Activated T-helper 2 cell treated with anti-CD3 and anti-CD28 coated beads, Interferon-gamma antibody, Interleukin-2, Interleukin-4, amounts not matched to agents 10 μg/mL and 5 μg/mL and 100 μg/mL, durations not matched to agents 14 hours and 24 hours and 36 hours (primary cell): ENCODE measurements at regions of chr5 and their contacts with region 1.

Region 1: GRCh38 chr5:10635257-10635866 is 71.5 kb downstream of the ANKRD33B start:
- DNase-seq: peak; percentile 69
- H3K4me3 Mint-ChIP-seq: peak overlapping the region; percentile 73
- H3K27ac Mint-ChIP-seq: peak overlapping the region; percentile 97
- H3K4me1 Mint-ChIP-seq: peaks cover 57% of the 10 kb centered on the region
- H3K27me3 Mint-ChIP-seq: no peaks in the 10 kb centered on the region

Region 2: GRCh38 chr5:10249948-10250803 is 385.2 kb before region 1 on chr5 and contains the start of gene CCT5:
- intact Hi-C with region 1: loop called (anchors 10 kb)
- DNase-seq: peak; percentile 90
- H3K4me3 Mint-ChIP-seq: peak within 1 kb of the TSS; percentile 96
- H3K27ac Mint-ChIP-seq: peak within 1 kb of the TSS; percentile 98
- H3K4me1 Mint-ChIP-seq: peaks cover 41% of the 10 kb centered on the region
- H3K27me3 Mint-ChIP-seq: no peaks in the 10 kb centered on the region
- total RNA-seq, gene CCT5: 494 and 522 TPM in 2 replicates

Region 3: DNA sequence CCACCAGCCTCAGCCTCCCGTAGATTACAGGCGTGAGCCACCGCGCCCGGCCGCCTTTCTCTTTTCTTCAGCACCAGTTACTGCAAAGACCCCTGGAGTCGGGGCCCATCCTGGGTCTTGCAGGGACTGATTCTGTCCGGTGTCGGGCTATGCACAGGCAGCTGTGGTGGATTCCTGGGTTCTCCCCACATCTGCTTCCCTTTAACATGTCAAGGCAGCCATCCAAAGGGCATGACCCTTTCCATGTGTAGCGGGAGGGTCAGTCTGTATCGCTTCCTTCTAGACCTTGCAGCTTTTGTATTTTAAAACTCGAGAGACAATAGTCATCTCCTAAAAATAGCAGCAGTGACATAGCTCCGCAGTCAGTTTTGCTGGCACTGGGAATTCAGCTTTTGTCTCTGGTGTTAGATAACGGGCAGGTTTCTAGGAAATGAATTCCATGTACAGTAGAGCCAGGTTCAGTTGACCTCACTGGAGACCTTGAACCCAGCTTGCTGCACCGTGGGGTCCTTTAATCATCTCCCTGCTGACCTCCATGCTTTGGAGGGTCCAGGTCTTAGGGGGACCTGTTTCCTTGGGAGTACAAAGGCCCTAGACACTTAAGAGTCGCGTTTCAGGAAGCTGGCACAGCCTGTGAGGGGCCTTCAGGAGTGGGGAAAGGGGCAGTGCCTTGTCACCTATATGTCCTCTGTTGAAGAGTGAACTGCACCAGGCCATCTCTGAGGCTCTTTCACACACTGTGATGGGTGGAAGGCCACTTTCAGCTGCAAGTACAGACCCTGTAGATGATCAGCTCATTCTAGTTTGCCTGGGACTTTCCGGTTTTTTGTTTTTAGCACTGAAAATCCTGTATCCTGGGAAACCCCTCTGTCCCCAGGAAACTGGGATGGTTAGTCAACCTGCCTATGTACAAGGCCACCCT is 57.7 kb before region 1 on chr5:
- intact Hi-C with region 1: loop called (anchors 2 kb)
- DNase-seq: no peak
- H3K4me3 Mint-ChIP-seq: no peak overlapping the region
- H3K27ac Mint-ChIP-seq: peak overlapping the region; percentile 30
- H3K4me1 Mint-ChIP-seq: peaks cover 66% of the 10 kb centered on the region
- H3K27me3 Mint-ChIP-seq: no peaks in the 10 kb centered on the region

Region 4: DNA sequence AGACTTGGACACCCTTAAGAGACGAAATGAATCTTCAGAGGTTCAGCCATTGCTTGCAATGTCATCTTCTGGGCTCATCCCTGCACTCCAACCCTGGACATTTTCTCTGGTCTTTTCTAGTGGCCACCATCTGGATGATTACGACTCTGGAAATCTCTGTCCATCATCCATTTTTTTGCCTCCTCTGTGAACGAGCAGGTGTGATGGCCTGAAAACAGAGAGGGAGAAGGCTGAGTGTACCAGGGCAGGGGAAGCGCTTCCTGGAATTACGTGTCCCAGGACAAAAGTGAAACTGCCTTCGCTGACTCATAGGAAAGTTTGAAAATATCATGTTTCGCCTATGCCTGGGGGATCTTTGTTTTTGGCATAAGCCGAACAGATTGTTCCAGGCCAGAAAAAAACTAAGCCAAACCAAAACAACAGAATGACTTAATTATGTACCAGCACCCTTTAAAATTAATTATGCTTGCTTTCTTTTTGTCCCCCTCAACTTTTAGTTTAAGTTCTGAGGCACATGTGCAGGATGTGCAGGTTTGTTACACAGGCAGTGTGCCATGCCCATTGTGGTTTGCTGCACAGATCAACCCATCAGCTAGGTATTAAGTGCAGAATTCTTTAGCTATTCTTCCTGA is 39.6 kb before region 1 on chr5:
- intact Hi-C with region 1: loop called (anchors 1 kb)
- DNase-seq: peak; percentile 28
- H3K4me3 Mint-ChIP-seq: peak overlapping the region; percentile 7
- H3K27ac Mint-ChIP-seq: peak overlapping the region; percentile 79
- H3K4me1 Mint-ChIP-seq: peaks cover 69% of the 10 kb centered on the region
- H3K27me3 Mint-ChIP-seq: no peaks in the 10 kb centered on the region

Region 5: DNA sequence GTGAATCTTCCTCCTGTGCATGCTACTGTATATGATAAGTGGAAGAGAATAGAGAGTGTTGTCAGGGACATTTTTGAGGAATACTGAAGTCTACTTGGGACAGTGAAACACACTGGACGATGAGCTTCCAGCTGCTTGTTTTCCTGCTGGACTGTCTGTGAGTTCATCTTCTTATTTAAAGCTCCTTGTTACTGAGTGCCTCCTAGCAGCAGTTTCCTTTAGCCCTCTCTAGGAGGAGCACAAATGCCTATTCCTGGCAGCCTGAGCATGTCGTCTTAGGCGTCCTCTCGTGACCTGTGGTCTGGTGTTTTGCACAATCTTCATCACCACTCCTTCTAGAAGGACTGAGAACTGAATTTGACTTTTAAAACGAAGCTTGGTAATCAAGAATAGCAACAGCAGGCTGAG is 27.7 kb before region 1 on chr5:
- intact Hi-C with region 1: loop called (anchors 1 kb)
- DNase-seq: no peak
- H3K4me3 Mint-ChIP-seq: peak overlapping the region; percentile 77
- H3K27ac Mint-ChIP-seq: peak overlapping the region; percentile 96
- H3K4me1 Mint-ChIP-seq: peaks cover 45% of the 10 kb centered on the region
- H3K27me3 Mint-ChIP-seq: no peaks in the 10 kb centered on the region

Region 6: DNA sequence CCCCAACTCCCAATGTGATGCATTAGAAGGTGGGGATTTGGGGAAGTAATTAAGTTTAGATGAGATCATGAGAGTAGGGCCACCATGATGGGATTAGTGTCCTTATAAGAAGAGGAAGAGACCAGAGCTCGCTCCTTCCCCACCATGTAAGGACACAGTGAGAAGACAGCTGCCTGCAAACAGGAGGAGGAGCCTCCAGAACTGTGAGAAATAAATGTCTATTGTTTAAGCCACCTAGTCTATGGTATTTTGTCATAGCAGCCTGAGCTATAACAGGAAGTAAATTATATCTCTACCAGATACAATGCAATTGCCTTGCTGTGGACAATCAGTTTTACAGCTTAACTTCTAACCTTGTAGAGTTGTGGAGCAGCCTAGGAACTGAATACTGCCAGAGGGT is 13.5 kb before region 1 on chr5:
- intact Hi-C with region 1: no loop called
- DNase-seq: no peak
- H3K4me3 Mint-ChIP-seq: no peak overlapping the region
- H3K27ac Mint-ChIP-seq: no peak overlapping the region
- H3K4me1 Mint-ChIP-seq: peaks cover 5% of the 10 kb centered on the region
- H3K27me3 Mint-ChIP-seq: no peaks in the 10 kb centered on the region

Region 7: DNA sequence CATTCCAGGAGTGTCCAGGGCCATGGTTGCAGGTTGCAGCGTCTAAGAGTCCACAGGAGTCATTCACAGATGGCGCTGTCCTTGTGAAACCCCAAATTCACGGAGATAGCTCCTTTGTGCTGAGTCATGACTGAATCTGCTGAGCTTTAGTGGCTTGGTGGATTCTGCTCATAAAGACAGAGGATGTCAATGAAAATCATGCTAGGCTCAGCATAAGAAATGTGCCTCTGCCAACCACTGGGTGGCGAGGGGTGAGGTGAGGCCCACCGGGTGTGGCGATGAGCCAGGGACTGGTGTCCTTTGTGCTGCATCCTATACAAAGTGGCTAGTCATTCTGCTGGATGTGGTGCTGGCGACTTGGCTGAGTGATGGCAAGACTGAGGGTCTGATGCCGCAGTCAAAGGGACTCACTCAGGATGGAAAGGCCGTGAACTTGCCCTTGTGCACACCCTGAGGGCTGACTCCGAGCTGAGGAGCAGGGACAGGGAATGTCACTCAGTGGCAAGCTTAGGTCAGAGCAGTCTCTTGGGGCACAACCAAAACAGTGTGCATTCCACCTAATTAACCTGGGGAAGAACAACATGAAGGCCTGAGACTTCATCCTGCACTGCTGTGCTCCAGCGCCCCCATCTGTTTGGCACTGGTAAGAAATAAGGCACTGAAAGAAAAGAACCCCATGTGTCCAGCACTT is 54.2 kb after region 1 on chr5:
- intact Hi-C with region 1: loop called (anchors 5 kb)
- DNase-seq: no peak
- H3K4me3 Mint-ChIP-seq: no peak overlapping the region
- H3K27ac Mint-ChIP-seq: no peak overlapping the region
- H3K4me1 Mint-ChIP-seq: no peaks in the 10 kb centered on the region
- H3K27me3 Mint-ChIP-seq: no peaks in the 10 kb centered on the region

Region 8: GRCh38 chr5:10975945-10976344 is 340.6 kb after region 1 on chr5:
- intact Hi-C with region 1: no loop called
- DNase-seq: no peak
- H3K4me3 Mint-ChIP-seq: no peak overlapping the region
- H3K27ac Mint-ChIP-seq: no peak overlapping the region
- H3K4me1 Mint-ChIP-seq: no peaks in the 10 kb centered on the region
- H3K27me3 Mint-ChIP-seq: no peaks in the 10 kb centered on the region